ENCODE measurements at regions of chr10 and their contacts with region 1.

Region 1: DNA sequence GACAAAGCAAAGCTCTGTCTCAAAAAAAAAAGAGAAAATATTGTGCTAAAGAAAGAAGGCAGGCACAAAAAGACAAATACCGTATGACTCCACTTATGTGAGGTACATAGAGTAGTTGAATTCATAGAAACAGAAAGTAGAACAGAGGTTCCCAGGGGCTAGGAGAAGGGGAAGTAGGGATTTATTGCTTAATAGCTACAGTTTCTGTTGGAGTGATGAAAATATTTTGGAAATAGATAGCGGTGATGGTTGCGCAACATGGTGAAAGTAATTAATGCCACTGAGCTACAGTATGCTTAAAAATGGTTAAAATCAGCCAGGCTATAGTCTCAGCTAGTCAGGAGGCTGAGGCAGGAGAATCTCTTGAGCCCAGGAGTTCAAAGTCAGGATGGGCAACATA is 18.5 kb upstream of the NPFFR1 start:
- DNase-seq: peak; percentile 9
- H3K4me3 ChIP-seq: no peak overlapping the region
- H3K27me3 ChIP-seq: no peaks in the 10 kb centered on the region
- CTCF ChIP-seq: no peak

Region 2: DNA sequence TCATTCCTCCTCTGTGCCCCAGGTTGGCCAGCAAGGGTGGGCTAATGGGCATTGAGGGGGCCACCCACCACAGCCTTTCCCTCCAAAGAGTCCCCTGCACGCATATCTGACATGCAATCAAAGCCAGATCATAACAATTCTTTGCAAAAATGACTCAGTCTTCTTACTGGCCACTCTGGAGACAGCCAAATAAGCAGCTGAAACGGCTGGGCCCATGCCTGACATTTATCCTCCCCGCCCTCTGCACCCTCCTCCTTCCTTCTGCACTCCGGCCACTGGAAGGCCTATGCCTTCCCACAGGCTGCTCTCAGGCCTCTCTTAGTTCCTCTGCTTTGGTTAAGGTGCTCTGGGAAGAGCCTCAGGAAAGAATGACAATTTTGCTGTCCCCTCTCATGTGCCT is 10.7 kb after region 1 on chr10:
- CTCF ChIA-PET with region 1: no interaction called
- POLR2A ChIA-PET with region 1: no interaction called
- DNase-seq: no peak
- H3K4me3 ChIP-seq: no peak overlapping the region
- H3K27me3 ChIP-seq: no peaks in the 10 kb centered on the region
- CTCF ChIP-seq: no peak

Region 3: DNA sequence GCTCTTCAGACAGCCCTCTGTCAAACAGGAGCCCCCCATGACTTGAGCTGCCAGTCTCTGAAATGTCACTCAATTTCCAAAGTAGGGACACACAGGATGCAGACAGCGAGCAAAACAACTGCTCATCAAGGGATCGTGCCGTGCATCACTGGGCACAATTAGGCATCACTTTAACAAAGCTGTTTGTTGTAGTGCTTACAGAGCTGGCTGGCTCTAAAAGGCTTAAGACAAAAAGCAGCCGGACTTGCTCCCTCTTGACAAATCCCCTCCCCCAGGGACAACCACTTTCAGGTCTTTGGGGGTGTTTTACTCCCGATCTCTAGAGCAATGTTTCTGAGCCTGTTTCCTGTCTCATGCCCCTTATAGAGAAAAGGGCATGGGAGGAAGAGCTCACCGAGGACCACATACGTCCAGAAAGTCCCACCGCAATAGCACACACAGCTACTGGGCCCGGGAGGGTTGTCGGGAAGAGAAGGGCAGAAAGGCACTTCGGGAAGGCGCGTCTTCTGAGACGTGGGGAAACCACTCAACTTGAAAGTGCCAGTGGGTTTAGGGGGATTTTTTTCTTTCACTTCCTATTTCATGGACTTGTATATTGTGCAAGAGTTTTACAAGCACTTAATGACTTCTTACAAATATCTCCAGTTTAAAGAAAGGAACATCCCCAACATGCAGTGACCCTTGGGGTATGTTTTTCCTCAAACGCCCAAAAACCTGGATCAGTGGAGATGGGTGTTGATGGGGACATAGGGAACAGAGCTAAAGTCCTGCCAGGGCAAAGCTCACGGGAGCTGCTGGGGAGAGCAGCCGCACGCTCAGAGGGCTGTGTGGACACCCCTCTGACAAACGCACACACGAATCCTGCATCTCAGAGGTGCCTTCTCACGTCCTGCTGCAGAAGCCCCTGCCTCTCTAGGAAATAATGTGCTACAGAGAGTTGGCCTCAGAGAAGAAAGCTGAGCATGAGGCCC is 53.0 kb after region 1 on chr10:
- CTCF ChIA-PET with region 1: no interaction called
- POLR2A ChIA-PET with region 1: interaction called, 21 read pairs
- DNase-seq: no peak
- H3K4me3 ChIP-seq: no peak overlapping the region
- H3K27me3 ChIP-seq: no peaks in the 10 kb centered on the region
- CTCF ChIP-seq: no peak